ENCODE measurements at regions of chr21 and their contacts with region 1.

Region 1: GRCh38 chr21:29002442-29003144 is 9.9 kb upstream of the LTN1 start:
- DNase-seq: peak; percentile 98 to 99
- ATAC-seq: peak; percentile 100
- H3K4me3 ChIP-seq: peak overlapping the region; percentile 67 to 94
- H3K27ac ChIP-seq: peak overlapping the region; percentile 96 to 98
- H3K4me1 ChIP-seq: no peaks in the 10 kb centered on the region
- H3K27me3 ChIP-seq: no peaks in the 10 kb centered on the region

Region 2: GRCh38 chr21:29024474-29025327 is 22.1 kb after region 1 on chr21 and contains the start of gene USP16:
- intact Hi-C with region 1: loop called in 1 of 2 experiments (anchors 2 kb)
- DNase-seq: peak; percentile 96 to 97
- ATAC-seq: peak; percentile 98
- H3K4me3 ChIP-seq: peak within 1 kb of the TSS; percentile 69 to 96
- H3K27ac ChIP-seq: peak within 1 kb of the TSS; percentile 87 to 100
- H3K4me1 ChIP-seq: peaks cover 0 to 1% of the 10 kb centered on the region in 2 donors
- H3K27me3 ChIP-seq: no peaks in the 10 kb centered on the region
- total RNA-seq, gene USP16: 33.8 to 42.8 TPM

Region 3: GRCh38 chr21:29318354-29318753 is 315.8 kb after region 1 on chr21:
- intact Hi-C with region 1: no loop called
- DNase-seq: no peak
- ATAC-seq: no peak
- H3K4me3 ChIP-seq: no peak overlapping the region
- H3K27ac ChIP-seq: no peak overlapping the region
- H3K4me1 ChIP-seq: peaks cover 3 to 7% of the 10 kb centered on the region in 2 donors
- H3K27me3 ChIP-seq: no peaks in the 10 kb centered on the region